ENCODE measurements at regions of chr7 and their contacts with region 1.

Region 1: GRCh38 chr7:75033050-75033449 is 40.6 kb downstream of the RCC1L start:
- DNase-seq: peak; percentile 21 to 75
- H3K4me3 ChIP-seq: no peak overlapping the region
- H3K27ac ChIP-seq: no peak overlapping the region
- H3K4me1 ChIP-seq: no peaks in the 10 kb centered on the region
- H3K27me3 ChIP-seq: no peaks in the 10 kb centered on the region
- CTCF ChIP-seq: peak; percentile 64 to 80 (median 80)
- EP300 ChIP-seq: no peak
- POLR2A ChIP-seq: no peak
- RAD21 ChIP-seq: peak; percentile 28 to 57; a peak in 3 of 4 replicates

Region 2: GRCh38 chr7:75010036-75010435 is 23.0 kb before region 1 on chr7:
- CTCF ChIA-PET with region 1: no interaction called
- POLR2A ChIA-PET with region 1: no interaction called
- DNase-seq: no peak
- H3K4me3 ChIP-seq: no peak overlapping the region
- H3K27ac ChIP-seq: no peak overlapping the region
- H3K4me1 ChIP-seq: no peaks in the 10 kb centered on the region; a peak in 1 of 7 replicates
- H3K27me3 ChIP-seq: no peaks in the 10 kb centered on the region
- CTCF ChIP-seq: no peak
- EP300 ChIP-seq: no peak
- POLR2A ChIP-seq: no peak
- RAD21 ChIP-seq: no peak

Region 3: DNA sequence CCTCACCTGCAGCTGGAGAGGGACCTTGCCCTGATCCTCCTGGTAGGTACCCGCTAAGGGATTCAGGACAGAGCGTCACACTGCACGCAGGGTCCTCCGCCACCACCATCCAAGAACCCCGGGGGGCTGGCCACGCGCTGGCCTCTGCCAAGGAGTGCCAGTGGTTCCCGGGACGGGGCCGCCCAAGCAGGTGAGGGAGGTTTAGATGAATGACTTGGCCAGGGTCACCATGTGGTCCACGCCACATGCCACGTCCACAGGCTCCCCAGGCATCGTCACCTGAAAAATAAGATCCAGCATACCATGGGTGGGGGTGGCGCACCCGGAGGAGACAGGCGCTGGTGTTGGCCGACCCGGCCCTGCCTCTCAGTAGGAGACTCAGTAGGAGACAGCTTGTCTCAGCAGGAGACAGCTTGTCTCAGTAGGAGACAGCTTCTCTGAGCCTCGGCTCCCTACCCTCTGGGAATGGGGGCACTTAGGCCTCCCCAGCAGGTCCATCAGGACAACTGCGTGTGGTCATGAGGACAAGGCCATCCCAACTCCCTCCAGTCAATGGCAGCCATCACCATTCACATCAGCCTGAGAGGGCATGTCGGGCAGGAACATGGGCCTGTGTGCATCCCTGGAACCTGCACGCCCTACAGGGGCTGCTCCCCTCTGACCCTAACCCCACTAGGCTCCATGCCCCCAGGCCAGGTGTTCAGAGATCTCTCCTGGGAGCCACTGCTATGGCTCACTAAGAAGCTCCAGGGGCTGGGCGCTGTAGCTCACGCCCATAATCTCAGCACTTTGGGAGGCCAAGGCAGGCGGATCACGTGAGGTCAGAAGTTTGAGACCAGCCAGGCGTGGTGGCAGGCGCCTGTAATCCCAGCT is 10.0 kb after region 1 on chr7:
- CTCF ChIA-PET with region 1: interaction called, 95 read pairs
- POLR2A ChIA-PET with region 1: interaction called, 6 read pairs
- DNase-seq: no peak
- H3K4me3 ChIP-seq: no peak overlapping the region
- H3K27ac ChIP-seq: no peak overlapping the region
- H3K4me1 ChIP-seq: no peaks in the 10 kb centered on the region; a peak in 1 of 7 replicates
- H3K27me3 ChIP-seq: no peaks in the 10 kb centered on the region
- CTCF ChIP-seq: no peak
- EP300 ChIP-seq: no peak
- POLR2A ChIP-seq: no peak
- RAD21 ChIP-seq: no peak

Region 4: GRCh38 chr7:75048435-75049379 is 15.7 kb after region 1 on chr7:
- CTCF ChIA-PET with region 1: interaction called, 95 read pairs
- POLR2A ChIA-PET with region 1: interaction called, 6 read pairs
- DNase-seq: no peak
- H3K4me3 ChIP-seq: no peak overlapping the region
- H3K27ac ChIP-seq: no peak overlapping the region
- H3K4me1 ChIP-seq: no peaks in the 10 kb centered on the region; a peak in 1 of 7 replicates
- H3K27me3 ChIP-seq: no peaks in the 10 kb centered on the region
- CTCF ChIP-seq: no peak
- EP300 ChIP-seq: no peak
- POLR2A ChIP-seq: no peak
- RAD21 ChIP-seq: no peak

Measured in H1 (cell line).